GM12878 (cell line): ENCODE measurements at regions of chr2 and their contacts with region 1.

Region 1: DNA sequence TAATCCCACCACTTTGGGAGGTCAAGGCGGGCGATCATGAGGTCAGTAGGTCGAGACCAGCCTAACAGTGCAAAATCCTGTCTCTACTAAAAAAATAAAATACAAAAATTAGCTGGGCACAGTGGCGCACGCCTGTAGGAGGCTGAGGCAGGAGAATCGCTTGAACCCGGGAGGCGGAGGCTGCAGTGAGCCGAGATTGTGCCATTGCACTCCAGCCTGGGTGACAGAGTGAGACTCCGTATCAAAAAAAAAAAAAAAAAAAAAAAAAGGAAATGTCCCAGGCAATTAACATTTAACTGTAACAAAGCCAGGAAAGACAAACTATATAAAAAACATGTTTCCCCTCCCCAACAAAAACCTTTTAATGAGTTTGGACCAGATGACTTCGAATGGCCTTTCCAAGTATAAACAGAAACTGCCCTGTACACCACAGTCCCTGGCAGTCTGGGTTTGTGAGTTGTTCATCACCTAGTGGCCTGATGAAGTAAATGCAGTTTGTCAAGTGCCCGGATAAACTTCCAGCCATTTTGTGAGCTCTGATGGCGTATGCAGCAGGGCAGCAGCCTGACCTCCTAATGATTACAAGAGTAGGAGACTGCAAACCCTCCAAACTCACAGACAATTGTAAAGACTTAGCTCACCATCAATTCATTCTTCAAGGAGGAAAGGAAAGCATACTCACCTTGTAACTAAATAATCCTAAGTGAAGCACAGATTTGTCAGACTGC is 16.6 kb upstream of the PCBP1 start:
- DNase-seq: no peak
- ATAC-seq: peak; percentile 86
- H3K4me3 ChIP-seq: no peak overlapping the region
- H3K27ac ChIP-seq: peak overlapping the region; percentile 89
- H3K4me1 ChIP-seq: peaks cover 18% of the 10 kb centered on the region
- H3K27me3 ChIP-seq: no peaks in the 10 kb centered on the region
- CTCF ChIP-seq: peak; percentile 80 to 90 (median 86)
- EP300 ChIP-seq: no peak
- POLR2A ChIP-seq: peak; percentile 37; the same call in 1 of the 2 replicates
- RAD21 ChIP-seq: peak; percentile 90

Region 2: DNA sequence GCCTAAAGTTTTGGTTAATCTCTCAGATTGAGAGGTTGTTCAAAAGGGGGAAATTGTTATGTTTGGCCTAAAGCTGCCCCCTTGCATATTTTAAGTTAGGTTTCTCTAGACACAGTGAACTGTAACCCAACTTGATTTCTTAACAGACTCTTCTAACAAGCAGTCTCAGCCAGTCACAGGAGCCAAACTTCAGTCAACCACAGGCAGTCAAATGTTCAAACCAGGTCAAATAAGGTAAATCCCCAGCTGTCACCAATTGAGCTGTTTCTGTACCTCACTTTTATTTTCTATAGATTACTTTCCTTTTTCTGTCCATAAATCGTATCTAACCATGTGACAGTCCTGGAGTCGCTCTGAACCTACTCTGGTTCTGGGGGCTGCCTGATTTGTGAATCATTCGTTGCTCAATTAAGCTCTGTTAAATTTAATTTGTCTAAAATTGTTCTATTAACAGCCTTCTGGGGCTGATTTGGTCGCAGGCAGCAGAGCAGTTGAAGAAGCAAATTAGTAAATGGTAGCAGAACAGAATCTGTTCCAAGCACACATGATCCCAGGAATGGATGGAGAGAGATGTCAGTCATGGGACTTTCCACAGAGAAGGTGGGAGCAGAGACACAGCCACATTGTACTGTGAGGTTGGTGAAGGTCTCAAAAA is 617.1 kb before region 1 on chr2:
- CTCF ChIA-PET with region 1: no interaction called
- POLR2A ChIA-PET with region 1: interaction called, 10 read pairs
- RAD21 ChIA-PET with region 1: no interaction called
- SMC1A ChIA-PET with region 1: no interaction called
- in situ Hi-C with region 1: no loop called
- intact Hi-C with region 1: no loop called
- DNase-seq: peak; percentile 61
- ATAC-seq: peak; percentile 97
- H3K4me3 ChIP-seq: no peak overlapping the region
- H3K27ac ChIP-seq: peak overlapping the region; percentile 20; the same call in 1 of the 2 replicates
- H3K4me1 ChIP-seq: peaks cover 9% of the 10 kb centered on the region; the same call in 1 of the 2 replicates
- H3K27me3 ChIP-seq: no peaks in the 10 kb centered on the region
- CTCF ChIP-seq: no peak
- EP300 ChIP-seq: no peak
- POLR2A ChIP-seq: no peak
- RAD21 ChIP-seq: no peak

Region 3: GRCh38 chr2:70014959-70015358 is 55.7 kb before region 1 on chr2:
- CTCF ChIA-PET with region 1: interaction called, 3 read pairs
- POLR2A ChIA-PET with region 1: interaction called, 12 read pairs
- RAD21 ChIA-PET with region 1: no interaction called
- SMC1A ChIA-PET with region 1: interaction called, 4 read pairs
- in situ Hi-C with region 1: no loop called
- intact Hi-C with region 1: no loop called
- DNase-seq: no peak
- ATAC-seq: peak; percentile 83
- H3K4me3 ChIP-seq: no peak overlapping the region
- H3K27ac ChIP-seq: peak overlapping the region; percentile 56
- H3K4me1 ChIP-seq: peaks cover 14% of the 10 kb centered on the region
- H3K27me3 ChIP-seq: no peaks in the 10 kb centered on the region
- CTCF ChIP-seq: no peak
- EP300 ChIP-seq: no peak
- POLR2A ChIP-seq: no peak
- RAD21 ChIP-seq: no peak

Region 4: DNA sequence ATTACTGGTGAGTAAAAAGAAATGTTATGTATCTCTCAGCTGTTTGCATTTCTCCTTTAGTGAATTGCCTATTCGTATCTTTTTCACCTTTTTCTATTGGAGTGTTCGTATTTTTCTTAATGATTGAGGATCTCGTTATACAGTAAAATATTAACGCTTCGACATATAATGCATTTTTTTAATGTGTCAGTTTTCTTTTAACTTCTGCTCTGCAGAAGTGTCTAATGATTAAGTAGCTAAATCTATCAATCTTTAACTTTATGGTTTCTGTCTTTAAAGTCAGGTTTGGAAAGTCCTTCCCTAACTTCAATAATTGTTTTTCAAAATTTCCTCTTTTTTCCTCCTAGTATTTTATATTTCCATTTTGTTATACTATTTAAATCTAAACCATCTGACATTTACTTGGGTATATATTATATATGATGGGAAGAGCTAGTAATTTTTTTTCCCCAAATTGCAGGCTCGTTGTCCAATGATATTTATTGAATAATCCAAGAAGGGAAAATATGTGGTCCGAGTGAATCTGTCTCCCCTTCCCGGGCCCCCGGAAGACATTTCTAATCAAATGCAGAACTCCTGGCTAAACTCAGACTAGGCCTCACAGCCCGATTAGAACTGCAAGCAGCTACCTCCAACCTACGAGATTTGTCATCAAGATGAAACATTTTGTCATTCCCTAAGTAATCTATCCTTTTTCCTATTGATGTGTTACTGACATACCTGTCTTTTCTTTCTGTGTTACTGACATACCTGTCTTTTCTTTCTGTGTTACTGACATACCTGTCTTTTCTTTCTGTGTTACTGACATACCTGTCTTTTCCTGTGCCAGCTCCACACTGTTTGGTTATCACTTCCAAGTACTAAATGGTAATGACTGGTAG is 33.8 kb after region 1 on chr2:
- CTCF ChIA-PET with region 1: interaction called, 4 read pairs
- POLR2A ChIA-PET with region 1: interaction called, 7 read pairs
- RAD21 ChIA-PET with region 1: interaction called, 19 read pairs
- SMC1A ChIA-PET with region 1: interaction called, 9 read pairs
- in situ Hi-C with region 1: no loop called
- intact Hi-C with region 1: no loop called
- DNase-seq: no peak
- ATAC-seq: peak; percentile 17; the same call in 2 of the 3 replicates
- H3K4me3 ChIP-seq: peak overlapping the region; percentile 53
- H3K27ac ChIP-seq: peak overlapping the region; percentile 97
- H3K4me1 ChIP-seq: peaks cover 38% of the 10 kb centered on the region
- H3K27me3 ChIP-seq: no peaks in the 10 kb centered on the region
- CTCF ChIP-seq: no peak
- EP300 ChIP-seq: no peak
- POLR2A ChIP-seq: no peak
- RAD21 ChIP-seq: 0 out of 2 replicates have a peak, but pooled peaks have one; percentile 3

Region 5: DNA sequence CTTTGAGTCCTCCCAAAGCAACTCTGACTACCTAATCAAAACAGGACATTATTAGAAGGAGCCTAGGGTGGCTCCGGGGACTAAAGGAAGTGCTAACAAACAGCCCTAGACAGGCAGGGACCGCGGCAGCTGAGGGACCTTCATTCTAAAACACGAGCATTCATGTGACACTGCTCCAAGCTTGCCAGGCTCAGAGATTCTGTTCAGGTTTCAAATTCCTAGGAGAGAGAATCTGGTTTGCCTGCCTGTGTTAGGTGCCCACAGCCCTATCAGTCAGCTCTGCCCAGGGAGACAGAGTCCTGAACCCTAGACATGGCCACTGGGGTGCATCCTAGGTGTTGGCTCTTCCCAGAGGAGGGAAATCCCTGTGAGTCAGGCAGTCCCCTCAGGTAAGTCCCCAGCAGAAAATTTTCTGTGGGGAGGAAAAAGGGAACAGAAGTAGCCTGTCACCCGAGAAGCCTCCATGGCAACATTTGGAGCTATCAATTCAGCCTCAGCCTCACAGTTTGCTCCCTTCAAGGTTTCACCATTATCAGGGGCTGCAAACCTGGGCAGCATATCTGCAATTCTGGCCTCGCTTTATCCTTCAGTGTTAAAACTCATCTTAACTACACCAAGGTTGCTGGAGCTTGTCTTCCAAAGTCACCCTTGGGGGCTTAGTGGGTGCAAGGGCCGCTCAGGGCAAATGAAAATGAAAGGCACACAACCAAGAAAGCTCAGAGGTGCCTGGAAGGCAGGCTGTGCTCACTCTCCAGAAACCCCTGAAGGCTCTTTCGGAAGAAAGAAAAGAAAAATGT is 45.1 kb after region 1 on chr2:
- CTCF ChIA-PET with region 1: interaction called, 17 read pairs
- POLR2A ChIA-PET with region 1: interaction called, 6 read pairs
- RAD21 ChIA-PET with region 1: interaction called, 23 read pairs
- SMC1A ChIA-PET with region 1: interaction called, 10 read pairs
- in situ Hi-C with region 1: no loop called
- intact Hi-C with region 1: no loop called
- DNase-seq: no peak
- ATAC-seq: peak; percentile 78
- H3K4me3 ChIP-seq: peak overlapping the region; percentile 30; the same call in 1 of the 2 replicates
- H3K27ac ChIP-seq: peak overlapping the region; percentile 88
- H3K4me1 ChIP-seq: peaks cover 51% of the 10 kb centered on the region
- H3K27me3 ChIP-seq: no peaks in the 10 kb centered on the region
- CTCF ChIP-seq: peak in 1 of 3 experiments; percentile 27; a peak in 2 of 6 replicates
- EP300 ChIP-seq: 0 out of 4 replicates have a peak, but pooled peaks of 1 of the 2 experiments have one; percentile 34
- POLR2A ChIP-seq: no peak
- RAD21 ChIP-seq: no peak

Region 6: DNA sequence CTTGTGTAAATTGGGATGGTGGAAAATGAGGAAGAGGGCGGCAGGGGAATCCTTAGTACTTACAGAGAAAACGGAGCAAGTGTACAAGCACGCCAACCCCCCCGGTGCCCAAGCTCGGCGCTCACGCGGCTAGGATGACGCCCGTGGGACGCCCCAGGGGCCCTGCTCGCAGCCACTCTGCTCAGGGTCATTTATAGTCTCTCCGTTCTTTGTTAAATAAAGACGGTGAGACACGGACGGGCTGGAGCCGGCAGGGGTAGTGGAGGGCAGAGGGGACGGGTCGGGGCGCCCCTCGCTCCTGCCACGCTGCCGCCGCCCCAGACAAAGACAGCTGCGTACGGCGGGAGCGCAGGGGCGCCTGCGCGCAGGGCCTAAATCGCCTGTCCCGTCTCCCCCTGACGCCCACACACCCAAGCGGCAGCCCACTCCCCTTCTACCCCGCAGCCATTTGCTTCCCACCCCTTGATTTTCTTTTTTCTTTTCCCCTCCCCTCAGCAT is 54.3 kb after region 1 on chr2:
- CTCF ChIA-PET with region 1: interaction called, 9 read pairs
- POLR2A ChIA-PET with region 1: interaction called, 12 read pairs
- RAD21 ChIA-PET with region 1: interaction called, 23 read pairs
- SMC1A ChIA-PET with region 1: interaction called, 17 read pairs
- in situ Hi-C with region 1: no loop called
- intact Hi-C with region 1: no loop called
- DNase-seq: no peak
- ATAC-seq: peak; percentile 61
- H3K4me3 ChIP-seq: peak overlapping the region; percentile 67
- H3K27ac ChIP-seq: peak overlapping the region; percentile 95
- H3K4me1 ChIP-seq: peaks cover 62% of the 10 kb centered on the region
- H3K27me3 ChIP-seq: no peaks in the 10 kb centered on the region
- CTCF ChIP-seq: no peak
- EP300 ChIP-seq: no peak; a peak in 1 of 4 replicates
- POLR2A ChIP-seq: peak; percentile 88
- RAD21 ChIP-seq: no peak

Region 7: DNA sequence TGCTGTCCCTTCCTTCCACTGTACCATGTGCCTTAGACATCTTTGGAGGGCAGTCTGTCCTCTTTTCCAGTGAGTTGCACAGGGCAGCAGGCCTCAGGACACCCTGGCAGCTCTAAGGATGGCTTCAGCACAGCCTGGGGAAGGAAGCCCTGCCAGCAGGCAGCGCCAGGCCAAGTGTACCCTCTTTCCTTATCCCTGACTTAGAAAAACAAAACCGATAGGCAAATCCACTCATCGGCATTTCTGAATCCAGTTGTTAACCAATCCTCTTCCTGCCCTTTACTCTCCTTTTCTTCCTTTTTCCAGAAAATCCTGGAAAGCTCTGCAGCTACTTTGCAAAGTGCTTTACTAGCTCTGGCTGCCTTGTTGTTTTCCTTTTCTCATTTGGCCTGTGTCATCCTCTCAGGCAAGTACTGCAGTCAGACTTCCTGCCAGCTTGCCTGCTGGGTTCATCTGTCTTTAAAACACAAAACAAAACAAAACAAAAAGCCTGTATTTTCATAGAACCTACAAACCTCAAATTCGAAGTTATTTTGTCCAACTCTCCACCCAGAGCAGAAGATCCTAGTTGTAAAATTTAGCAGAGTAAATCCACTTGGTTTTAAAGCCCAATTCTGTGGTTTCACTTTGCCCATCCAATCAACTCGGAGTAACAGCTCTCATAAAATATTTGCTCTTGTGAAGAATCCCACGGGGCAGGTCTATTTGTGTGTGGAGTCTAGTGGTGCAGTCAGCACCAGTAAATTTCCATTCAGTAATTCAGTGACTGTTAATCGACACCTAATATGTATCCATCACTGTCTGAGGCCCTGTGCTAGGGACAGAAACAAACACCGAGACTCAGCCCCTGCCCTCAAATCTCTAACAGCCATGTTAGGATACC is 61.8 kb after region 1 on chr2:
- CTCF ChIA-PET with region 1: interaction called, 9 read pairs
- POLR2A ChIA-PET with region 1: interaction called, 18 read pairs
- RAD21 ChIA-PET with region 1: interaction called, 20 read pairs
- SMC1A ChIA-PET with region 1: interaction called, 47 read pairs
- in situ Hi-C with region 1: no loop called
- intact Hi-C with region 1: no loop called
- DNase-seq: no peak
- ATAC-seq: peak; percentile 63
- H3K4me3 ChIP-seq: peak overlapping the region; percentile 67
- H3K27ac ChIP-seq: peak overlapping the region; percentile 99
- H3K4me1 ChIP-seq: peaks cover 49% of the 10 kb centered on the region
- H3K27me3 ChIP-seq: no peaks in the 10 kb centered on the region
- CTCF ChIP-seq: no peak
- EP300 ChIP-seq: no peak
- POLR2A ChIP-seq: peak; percentile 73
- RAD21 ChIP-seq: no peak